Right ventricle myocardium inferior (tissue), 1 donor: ENCODE measurements at regions of chrX and their contacts with region 1.

Region 1: DNA sequence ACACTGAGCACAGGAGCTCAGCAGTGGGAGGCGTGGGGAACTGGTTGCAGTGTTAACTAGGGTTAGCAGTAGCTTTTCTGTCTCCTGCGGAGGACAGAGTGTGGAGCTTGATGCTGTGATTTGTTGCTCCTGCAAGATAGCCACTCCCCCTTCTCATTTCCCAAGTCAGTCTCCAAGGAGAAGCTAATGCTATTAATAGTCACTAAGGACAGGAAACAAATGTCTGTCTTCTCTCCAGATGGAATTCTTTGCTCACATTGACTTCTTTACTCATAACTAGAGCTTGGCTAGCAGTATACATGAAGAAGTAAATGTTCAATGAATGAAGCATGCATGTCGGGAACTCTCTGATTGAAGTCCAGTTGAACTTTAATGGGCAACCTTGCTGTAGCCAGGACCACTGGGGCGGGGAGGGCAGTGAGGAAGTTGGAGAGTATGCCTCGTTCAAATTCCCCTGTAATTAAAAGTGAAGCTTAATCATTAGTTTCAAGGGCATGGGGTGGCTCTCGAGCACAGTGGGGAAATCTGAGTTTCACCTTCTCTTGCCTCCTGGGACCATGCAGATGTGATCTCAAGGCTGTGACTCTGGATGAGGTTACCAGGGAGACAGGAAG is 156.6 kb upstream of the SCML1 start:
- DNase-seq: no peak
- ATAC-seq: peak; percentile 81

Region 2: DNA sequence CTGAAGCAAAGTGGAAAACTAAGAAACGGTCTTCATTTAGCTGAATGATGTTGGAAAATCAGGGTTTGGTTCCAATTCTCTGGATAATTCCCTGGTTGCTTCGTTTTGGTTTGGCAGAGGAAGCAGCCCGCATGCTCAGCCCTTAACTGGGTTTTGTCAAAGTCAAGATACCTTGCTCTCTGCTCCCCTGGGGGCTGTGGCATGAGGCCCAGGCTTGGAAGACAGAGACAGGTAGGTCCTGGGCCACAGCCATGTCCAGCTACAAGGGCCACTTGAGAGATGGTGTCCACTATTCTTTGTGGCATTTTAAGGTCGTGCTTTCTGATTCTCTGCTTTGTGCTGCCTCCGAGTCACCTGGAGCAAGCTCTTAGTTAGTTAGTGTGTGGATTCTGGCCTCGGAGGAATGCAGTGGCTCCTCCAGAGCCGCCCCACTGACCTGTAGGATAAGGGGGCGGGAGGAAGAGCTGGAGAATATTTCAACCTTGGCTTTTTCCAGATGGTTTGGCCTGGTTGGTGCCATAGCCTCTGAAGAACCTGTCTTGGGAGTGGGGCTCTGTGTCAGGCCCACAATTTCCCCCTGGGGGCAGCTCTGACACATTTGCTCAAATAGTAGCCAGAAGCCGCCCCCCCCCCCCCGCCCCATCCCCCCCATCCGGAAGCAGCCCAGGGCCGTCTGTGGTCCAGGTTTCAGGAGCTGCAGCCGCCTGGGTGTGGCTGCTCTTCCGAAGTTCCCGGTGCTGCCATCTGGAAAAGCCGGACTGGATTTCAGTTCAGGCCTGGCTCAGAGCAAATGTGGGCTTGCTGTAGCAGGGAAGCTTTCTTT is 58.6 kb before region 1 on chrX:
- intact Hi-C with region 1: loop called (anchors 10 kb)
- DNase-seq: no peak
- ATAC-seq: no peak

Region 3: DNA sequence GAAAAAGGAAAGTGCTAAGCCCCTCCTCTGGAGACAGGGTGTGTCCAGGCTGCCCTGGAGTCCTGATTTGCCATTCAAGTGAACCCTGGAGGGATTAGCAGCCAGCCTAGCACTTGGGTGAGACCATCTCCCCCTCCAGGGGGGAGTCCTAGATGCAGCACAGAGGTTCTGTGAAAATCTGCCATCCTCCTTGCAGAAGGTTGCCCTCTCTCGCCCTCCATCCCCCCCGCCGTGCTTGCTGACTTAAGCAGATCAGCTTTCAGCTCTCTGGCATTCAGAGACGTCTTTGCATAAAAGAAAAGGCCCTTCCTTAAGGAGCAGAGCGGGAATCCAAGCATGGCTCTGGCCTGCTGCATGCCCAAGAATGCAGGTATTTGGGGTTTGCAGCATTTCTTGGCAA is 54.6 kb after region 1 on chrX:
- intact Hi-C with region 1: no loop called
- DNase-seq: no peak
- ATAC-seq: no peak